Sigmoid colon (tissue), 7 donors: ENCODE measurements at regions of chr7 and their contacts with region 1.

Region 1: GRCh38 chr7:11505471-11505985 is 326.5 kb downstream of the THSD7A start:
- DNase-seq: no peak
- H3K4me3 ChIP-seq: no peak overlapping the region
- H3K27ac ChIP-seq: no peak overlapping the region
- H3K4me1 ChIP-seq: no peaks in the 10 kb centered on the region
- H3K27me3 ChIP-seq: no peaks in the 10 kb centered on the region
- CTCF ChIP-seq: no peak
- EP300 ChIP-seq: no peak
- POLR2A ChIP-seq: no peak

Region 2: GRCh38 chr7:11474902-11475585 is 30.5 kb before region 1 on chr7:
- intact Hi-C with region 1: loop called (anchors 2 kb)
- DNase-seq: no peak
- H3K4me3 ChIP-seq: no peak overlapping the region
- H3K27ac ChIP-seq: no peak overlapping the region
- H3K4me1 ChIP-seq: no peaks in the 10 kb centered on the region
- H3K27me3 ChIP-seq: no peaks in the 10 kb centered on the region
- CTCF ChIP-seq: no peak
- EP300 ChIP-seq: no peak
- POLR2A ChIP-seq: no peak

Region 3: DNA sequence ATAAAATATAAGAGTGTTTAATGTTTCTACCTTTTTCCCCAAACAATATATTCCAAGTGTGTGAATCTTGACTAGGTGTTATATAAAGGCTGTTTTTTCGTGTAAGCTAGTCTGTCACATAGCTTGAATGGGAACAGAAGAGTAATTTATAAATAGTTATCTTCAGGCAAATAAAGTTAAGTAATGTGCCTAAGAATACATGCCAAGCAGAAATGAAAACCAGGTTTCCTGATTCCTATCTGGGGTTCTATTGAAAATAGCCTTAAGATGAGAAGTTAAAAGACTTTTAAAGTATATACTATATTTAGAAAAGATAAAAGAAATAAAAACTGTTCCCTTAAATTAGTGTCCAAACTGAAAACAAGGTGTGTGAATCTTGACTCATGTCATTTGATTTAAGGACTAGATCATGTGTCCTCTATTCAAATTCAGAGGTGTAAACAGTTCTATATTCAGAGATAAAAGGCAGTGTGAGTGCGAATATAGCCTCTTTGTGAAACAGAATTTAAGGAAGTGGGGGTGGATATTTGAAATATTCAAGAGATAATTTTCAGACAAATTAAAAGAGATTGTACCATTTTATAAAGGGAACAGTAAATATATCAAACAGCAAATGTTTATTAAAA is 79.0 kb after region 1 on chr7:
- intact Hi-C with region 1: no loop called
- DNase-seq: no peak
- H3K4me3 ChIP-seq: no peak overlapping the region
- H3K27ac ChIP-seq: no peak overlapping the region
- H3K4me1 ChIP-seq: peaks cover 0 to 16% (median 7%) of the 10 kb centered on the region in 4 donors
- H3K27me3 ChIP-seq: no peaks in the 10 kb centered on the region
- CTCF ChIP-seq: no peak
- EP300 ChIP-seq: no peak
- POLR2A ChIP-seq: no peak